Testis (tissue), 5 donors: ENCODE measurements at regions of chr11 and their contacts with region 1.

Region 1: DNA sequence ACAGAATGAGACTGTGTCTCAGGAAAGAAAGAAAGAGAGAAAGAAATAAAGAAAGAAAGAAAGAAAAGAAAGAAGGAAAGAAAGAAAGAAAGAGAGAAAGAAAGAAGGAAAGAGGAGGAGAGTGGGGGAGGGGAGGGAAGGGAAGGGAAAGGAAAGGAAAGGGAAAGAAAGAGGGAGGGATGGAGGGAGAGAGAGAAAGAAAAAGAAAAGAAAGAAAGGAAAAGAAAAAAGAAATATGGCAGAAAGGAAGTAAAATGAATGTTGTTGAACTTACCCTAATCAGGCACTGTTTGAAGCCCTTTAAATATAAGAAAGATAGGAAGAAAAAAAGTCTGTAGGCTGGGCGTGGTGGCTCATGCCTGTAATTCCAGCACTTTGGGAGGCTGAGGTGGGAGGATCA is 276.1 kb downstream of the INSC start:
- DNase-seq: no peak
- H3K4me3 ChIP-seq: no peak overlapping the region
- H3K27ac ChIP-seq: no peak overlapping the region
- H3K4me1 ChIP-seq: no peaks in the 10 kb centered on the region
- H3K27me3 ChIP-seq: no peaks in the 10 kb centered on the region
- CTCF ChIP-seq: no peak
- POLR2A ChIP-seq: no peak

Region 2: GRCh38 chr11:15053191-15053685 is 337.6 kb before region 1 on chr11:
- intact Hi-C with region 1: no loop called
- DNase-seq: no peak
- H3K4me3 ChIP-seq: no peak overlapping the region
- H3K27ac ChIP-seq: no peak overlapping the region
- H3K4me1 ChIP-seq: no peaks in the 10 kb centered on the region
- H3K27me3 ChIP-seq: no peaks in the 10 kb centered on the region
- CTCF ChIP-seq: no peak
- POLR2A ChIP-seq: no peak

Region 3: DNA sequence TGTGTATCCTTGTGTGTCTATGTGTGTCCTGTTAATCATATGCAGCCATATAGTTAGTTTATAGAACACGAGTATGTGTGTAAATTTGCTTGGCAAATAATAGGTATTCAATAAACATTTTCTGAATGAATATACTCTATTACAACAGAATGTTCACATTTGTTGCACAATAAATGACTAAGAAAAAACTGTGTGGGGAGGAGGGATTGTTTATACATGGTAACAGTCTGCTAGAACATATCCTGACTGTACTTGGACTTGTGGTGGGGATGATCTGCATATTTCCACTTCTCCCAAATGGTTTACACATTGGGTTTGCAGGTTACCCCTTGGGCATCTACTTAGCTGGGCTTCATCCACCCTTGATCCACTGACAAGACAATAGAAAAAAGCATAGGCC is 81.6 kb before region 1 on chr11:
- intact Hi-C with region 1: no loop called
- DNase-seq: no peak
- H3K4me3 ChIP-seq: no peak overlapping the region
- H3K27ac ChIP-seq: no peak overlapping the region
- H3K4me1 ChIP-seq: no peaks in the 10 kb centered on the region
- H3K27me3 ChIP-seq: no peaks in the 10 kb centered on the region
- CTCF ChIP-seq: no peak
- POLR2A ChIP-seq: no peak

Region 4: GRCh38 chr11:15754221-15754620 is 363.4 kb after region 1 on chr11:
- intact Hi-C with region 1: no loop called
- DNase-seq: no peak
- H3K4me3 ChIP-seq: no peak overlapping the region
- H3K27ac ChIP-seq: no peak overlapping the region
- H3K4me1 ChIP-seq: no peaks in the 10 kb centered on the region
- H3K27me3 ChIP-seq: no peaks in the 10 kb centered on the region
- CTCF ChIP-seq: no peak
- POLR2A ChIP-seq: no peak

Region 5: GRCh38 chr11:15769203-15769602 is 378.3 kb after region 1 on chr11:
- intact Hi-C with region 1: loop called (anchors 10 kb)
- DNase-seq: no peak
- H3K4me3 ChIP-seq: no peak overlapping the region
- H3K27ac ChIP-seq: no peak overlapping the region
- H3K4me1 ChIP-seq: peaks cover 2% of the 10 kb centered on the region
- H3K27me3 ChIP-seq: no peaks in the 10 kb centered on the region
- CTCF ChIP-seq: no peak
- POLR2A ChIP-seq: no peak